Activated CD4-positive, alpha-beta T cell treated with anti-CD3 and anti-CD28 coated beads, Interleukin-2, amount 10 ng/mL, durations not matched to agents 7 days and 5 days (primary cell): ENCODE measurements at regions of chr12 and their contacts with region 1.

Region 1: GRCh38 chr12:93180566-93180965 is 197.2 kb upstream of the NUDT4 start:
- DNase-seq: no peak
- H3K4me3 Mint-ChIP-seq: no peak overlapping the region
- H3K27ac Mint-ChIP-seq: no peak overlapping the region
- H3K4me1 Mint-ChIP-seq: peaks cover 21% of the 10 kb centered on the region
- H3K27me3 Mint-ChIP-seq: no peaks in the 10 kb centered on the region

Region 2: DNA sequence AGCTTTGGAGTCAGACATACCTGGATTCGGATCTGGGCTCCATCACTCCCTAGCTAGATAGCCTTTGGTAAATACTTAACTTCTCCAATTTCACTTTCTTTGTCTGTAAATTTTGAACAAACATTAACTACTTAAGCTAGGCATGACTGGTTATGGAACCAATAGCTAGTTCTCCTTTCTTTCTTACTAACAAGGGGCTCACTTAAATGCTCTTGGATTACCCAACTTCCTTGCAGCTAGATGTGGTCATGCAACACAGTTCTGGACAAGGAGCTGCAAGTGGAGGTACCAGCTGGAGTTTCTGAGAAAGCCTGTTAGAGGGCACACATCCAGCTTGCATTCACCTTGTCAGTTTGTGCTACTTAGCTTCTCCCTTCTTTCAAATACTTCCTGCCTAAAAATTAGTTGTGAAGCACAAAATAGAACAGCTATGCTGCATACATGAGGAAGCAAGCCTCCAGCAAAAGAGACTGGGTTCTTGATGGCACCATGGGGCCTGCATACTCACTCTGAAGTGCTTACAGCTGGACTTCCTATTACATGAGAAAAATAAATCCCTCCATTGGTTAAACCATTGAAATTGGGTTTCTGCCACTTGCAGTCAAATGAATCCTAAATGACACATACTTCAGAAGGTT is 41.4 kb before region 1 on chr12:
- CTCF ChIA-PET with region 1: no interaction called
- POLR2A ChIA-PET with region 1: no interaction called
- DNase-seq: no peak
- H3K4me3 Mint-ChIP-seq: no peak overlapping the region
- H3K27ac Mint-ChIP-seq: no peak overlapping the region
- H3K4me1 Mint-ChIP-seq: peaks cover 19% of the 10 kb centered on the region
- H3K27me3 Mint-ChIP-seq: no peaks in the 10 kb centered on the region

Region 3: GRCh38 chr12:93167841-93168492 is 12.6 kb before region 1 on chr12:
- CTCF ChIA-PET with region 1: no interaction called
- POLR2A ChIA-PET with region 1: no interaction called
- DNase-seq: no peak
- H3K4me3 Mint-ChIP-seq: no peak overlapping the region
- H3K27ac Mint-ChIP-seq: no peak overlapping the region
- H3K4me1 Mint-ChIP-seq: peaks cover 2% of the 10 kb centered on the region
- H3K27me3 Mint-ChIP-seq: no peaks in the 10 kb centered on the region

Region 4: DNA sequence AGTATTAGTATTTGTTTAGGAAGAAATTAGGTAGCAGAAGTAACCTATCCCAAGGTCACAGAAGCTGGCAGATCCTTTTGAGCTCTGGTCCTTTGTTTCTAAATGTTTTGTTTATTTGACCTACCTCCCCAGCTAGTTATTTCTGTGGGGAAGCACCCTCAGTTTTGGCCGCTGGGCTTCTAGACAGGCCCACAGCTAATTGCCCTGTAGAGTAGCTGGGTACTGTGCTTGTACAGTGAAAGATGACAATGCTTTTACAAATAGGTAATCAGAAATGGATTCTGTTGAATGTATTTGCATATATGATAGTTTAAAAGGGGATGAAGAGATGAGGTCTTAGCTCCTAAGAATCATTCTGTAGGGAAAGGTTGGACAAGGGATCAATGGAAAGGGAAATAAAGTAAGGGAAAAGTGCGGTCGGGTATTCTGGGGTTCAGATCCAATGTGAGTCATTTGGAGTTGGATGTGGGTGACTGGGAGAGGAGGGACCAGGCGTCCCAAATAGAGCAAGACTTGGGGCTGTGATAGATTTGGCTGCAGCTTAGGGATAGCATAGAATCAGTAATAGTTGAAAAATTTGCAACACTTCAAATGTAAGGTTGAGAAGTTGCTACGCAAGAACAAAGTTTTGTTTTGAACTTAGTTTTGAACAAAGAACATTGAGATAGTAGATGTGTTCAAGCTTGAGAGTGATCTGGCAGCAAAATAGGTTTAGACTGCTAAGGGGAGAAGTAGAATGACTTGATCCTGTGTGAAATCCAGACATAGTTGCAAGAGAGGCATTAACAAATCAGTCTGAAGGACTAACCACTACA is 200.8 kb after region 1 on chr12:
- CTCF ChIA-PET with region 1: no interaction called
- POLR2A ChIA-PET with region 1: interaction called, 11 read pairs
- DNase-seq: no peak
- H3K4me3 Mint-ChIP-seq: peak overlapping the region; percentile 100
- H3K27ac Mint-ChIP-seq: peak overlapping the region; percentile 39
- H3K4me1 Mint-ChIP-seq: peaks cover 49% of the 10 kb centered on the region
- H3K27me3 Mint-ChIP-seq: no peaks in the 10 kb centered on the region